Activated naive CD8-positive, alpha-beta T cell treated with anti-CD3 and anti-CD28 coated beads, Interleukin-2, amount 10 ng/mL, durations not matched to agents 7 days and 5 days (primary cell): ENCODE measurements at regions of chr11 and their contacts with region 1.

Region 1: GRCh38 chr11:72030472-72031045 is 31.9 kb downstream of the IL18BP start:
- DNase-seq: no peak
- ATAC-seq: no peak
- H3K4me3 Mint-ChIP-seq: no peak overlapping the region
- H3K27ac Mint-ChIP-seq: no peak overlapping the region
- H3K4me1 Mint-ChIP-seq: peaks cover 25% of the 10 kb centered on the region
- H3K27me3 Mint-ChIP-seq: no peaks in the 10 kb centered on the region

Region 2: DNA sequence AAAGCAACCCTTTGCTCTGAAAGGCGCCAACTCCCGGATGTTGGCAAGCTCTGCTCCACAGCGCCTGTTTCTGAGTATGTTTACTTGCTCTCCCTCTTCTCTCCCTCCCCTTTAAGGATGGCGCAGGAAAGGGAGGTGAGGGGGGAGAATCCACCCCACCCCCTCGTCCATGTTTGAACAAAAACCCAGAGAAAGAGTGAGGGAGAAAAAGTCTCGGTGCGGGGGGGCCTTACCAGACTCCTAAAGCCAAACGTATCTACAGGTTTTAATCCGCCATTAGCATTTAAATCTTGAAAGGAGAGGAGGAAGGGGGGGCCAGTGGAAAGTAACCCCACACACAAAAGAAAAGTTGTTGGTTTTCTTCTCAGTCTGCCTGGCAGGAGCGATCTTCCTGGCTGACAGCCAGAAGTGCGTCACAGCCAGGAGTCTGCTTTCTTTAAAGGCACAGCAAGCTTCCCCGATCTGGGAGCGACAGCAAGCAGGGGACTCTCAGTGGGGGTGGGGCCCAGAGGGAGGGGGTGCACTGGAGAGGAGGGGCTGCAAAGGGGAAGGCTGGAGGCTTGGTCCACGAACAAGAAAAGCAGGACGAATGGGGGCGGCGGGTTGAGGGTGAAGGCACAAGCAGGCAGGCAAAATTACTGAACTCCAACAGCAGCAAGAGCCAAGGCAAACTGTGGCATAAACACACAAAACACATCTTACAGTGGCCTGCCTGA is 10.3 kb after region 1 on chr11:
- POLR2A ChIA-PET with region 1: interaction called, 10 read pairs
- DNase-seq: peak; percentile 62
- ATAC-seq: peak; percentile 65
- H3K4me3 Mint-ChIP-seq: no peak overlapping the region
- H3K27ac Mint-ChIP-seq: no peak overlapping the region
- H3K4me1 Mint-ChIP-seq: peaks cover 29% of the 10 kb centered on the region
- H3K27me3 Mint-ChIP-seq: no peaks in the 10 kb centered on the region